PC-9 (cell line): ENCODE measurements at regions of chr13 and their contacts with region 1.

Region 1: DNA sequence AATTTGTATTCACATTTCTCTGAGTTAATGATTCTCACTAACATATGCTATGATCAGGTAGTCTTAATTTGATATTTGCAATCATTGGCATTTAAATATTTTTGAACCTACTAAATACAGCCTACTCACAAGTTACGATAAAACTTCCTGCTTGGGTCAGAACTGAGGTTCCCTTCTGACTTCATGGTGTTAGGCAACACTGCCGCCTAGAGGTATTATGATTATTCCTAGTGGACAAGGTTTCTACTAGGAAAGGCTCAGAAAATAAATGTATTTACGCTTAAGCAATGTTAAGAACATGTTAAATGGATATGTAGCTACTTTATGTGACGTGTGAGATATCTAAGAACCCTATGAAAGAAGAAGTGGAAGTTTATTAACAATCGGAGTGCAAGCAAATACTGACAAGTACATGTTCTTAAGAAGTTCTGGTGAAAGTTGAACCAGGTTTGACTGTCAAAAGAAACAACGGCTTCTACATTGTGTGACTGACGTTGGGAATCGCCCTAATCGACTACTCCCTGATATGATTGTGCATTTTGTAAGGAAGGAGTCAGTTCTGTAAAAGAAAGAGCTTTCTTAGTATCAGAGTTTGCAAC is 1395.8 kb downstream of the SLITRK5 start:
- DNase-seq: peak in 1 of 2 experiments; percentile 13
- H3K4me3 ChIP-seq: no peak overlapping the region
- H3K27ac ChIP-seq: no peak overlapping the region
- H3K4me1 ChIP-seq: no peaks in the 10 kb centered on the region
- H3K27me3 ChIP-seq: no peaks in the 10 kb centered on the region
- CTCF ChIP-seq: peak; percentile 60; the same call in 1 of the 2 replicates

Region 2: DNA sequence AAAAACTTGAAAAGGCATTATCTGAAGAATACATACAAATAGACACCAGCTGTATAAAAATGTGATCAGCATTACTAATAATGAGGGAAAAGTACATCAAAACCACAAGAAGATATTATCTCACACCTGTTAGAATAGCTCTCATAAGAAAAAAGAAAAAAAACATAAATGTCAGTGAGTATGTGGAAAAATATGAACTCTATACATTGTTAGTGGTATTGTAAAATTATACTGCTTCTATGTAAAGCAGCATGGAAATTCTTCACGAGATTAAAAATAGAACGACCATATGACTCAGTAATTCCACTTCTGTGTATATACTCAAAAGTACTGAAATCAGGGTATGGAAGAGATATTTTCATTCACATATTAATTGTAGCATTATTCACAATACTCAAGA is 249.4 kb before region 1 on chr13:
- CTCF ChIA-PET with region 1: no interaction called
- POLR2A ChIA-PET with region 1: no interaction called
- intact Hi-C with region 1: loop called (anchors 10 kb)
- DNase-seq: no peak
- H3K4me3 ChIP-seq: no peak overlapping the region
- H3K27ac ChIP-seq: no peak overlapping the region
- H3K4me1 ChIP-seq: no peaks in the 10 kb centered on the region
- H3K27me3 ChIP-seq: no peaks in the 10 kb centered on the region
- CTCF ChIP-seq: no peak

Region 3: DNA sequence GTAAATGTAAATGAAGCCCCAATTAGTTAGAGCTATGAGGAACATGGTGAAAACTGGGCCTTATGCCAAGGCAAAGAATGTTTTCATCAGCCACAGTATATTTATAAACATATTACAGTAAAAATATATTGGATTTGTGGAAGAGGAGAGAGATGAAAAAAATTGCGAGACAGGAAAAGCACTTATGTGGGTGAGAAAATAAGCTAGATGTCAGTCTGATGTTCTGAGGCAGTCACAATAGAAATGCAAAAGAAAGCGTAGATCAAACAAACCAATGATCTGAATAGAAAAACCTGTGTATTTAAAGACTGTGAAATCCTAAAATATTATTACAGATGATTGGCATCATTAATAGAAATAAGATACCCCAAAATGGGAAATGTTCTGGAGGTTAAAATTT is 63.3 kb before region 1 on chr13:
- CTCF ChIA-PET with region 1: no interaction called
- POLR2A ChIA-PET with region 1: no interaction called
- intact Hi-C with region 1: no loop called
- DNase-seq: no peak
- H3K4me3 ChIP-seq: no peak overlapping the region
- H3K27ac ChIP-seq: no peak overlapping the region
- H3K4me1 ChIP-seq: no peaks in the 10 kb centered on the region
- H3K27me3 ChIP-seq: no peaks in the 10 kb centered on the region
- CTCF ChIP-seq: no peak

Region 4: DNA sequence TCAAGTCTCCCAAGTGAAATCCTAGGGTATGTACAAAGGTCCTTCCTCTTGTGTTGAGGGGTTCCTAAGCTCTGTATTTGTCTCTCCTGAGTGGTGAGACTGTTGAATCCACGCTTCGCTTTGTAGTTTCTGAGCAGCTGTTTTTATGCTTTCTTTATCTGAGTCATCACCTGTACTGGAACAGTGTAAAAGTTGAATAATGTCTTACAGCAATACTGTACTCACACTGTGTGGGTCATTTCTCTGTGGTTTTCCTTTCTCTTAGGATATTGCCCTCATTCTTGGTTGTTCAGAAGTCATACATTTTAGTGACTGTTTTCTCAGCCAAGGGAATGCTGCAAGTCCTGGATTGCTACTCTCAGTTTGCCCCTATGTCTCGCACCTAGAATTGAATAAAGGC is 200.8 kb after region 1 on chr13:
- CTCF ChIA-PET with region 1: no interaction called
- POLR2A ChIA-PET with region 1: no interaction called
- intact Hi-C with region 1: no loop called
- DNase-seq: no peak
- H3K4me3 ChIP-seq: no peak overlapping the region
- H3K27ac ChIP-seq: no peak overlapping the region
- H3K4me1 ChIP-seq: no peaks in the 10 kb centered on the region
- H3K27me3 ChIP-seq: no peaks in the 10 kb centered on the region
- CTCF ChIP-seq: no peak